ENCODE measurements at regions of chr10 and their contacts with region 1.

Region 1: DNA sequence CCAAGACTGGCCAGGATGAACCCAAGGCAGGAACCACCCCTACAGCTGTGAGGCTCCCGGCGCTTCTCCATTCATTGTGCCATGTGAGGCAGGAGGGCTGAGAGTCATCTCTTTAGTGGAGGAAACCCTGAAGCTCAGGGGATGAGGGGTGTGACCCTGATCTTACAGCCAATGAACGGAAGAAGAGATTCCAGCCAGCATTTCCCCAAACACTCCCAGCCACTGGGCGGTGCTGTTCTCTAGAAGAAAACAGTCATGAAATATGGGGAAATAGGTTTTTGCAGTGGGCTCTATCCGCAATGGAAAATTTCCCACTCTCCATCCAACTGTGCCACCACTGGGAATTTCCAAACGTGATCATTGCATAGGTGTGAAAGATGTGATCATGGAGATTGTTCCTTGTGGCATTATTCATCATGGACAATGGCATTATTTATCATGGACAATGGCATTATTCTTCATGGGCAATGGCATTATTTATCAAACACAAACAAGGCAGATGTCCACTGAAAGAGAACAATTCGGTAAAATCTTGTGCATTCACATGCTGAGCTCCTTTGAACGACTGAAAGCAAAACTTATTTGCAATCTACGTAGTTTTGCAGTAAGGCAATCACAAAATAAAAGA is 14.0 kb upstream of the SLC18A2 start:
- DNase-seq: peak; percentile 40
- H3K4me3 ChIP-seq: no peak overlapping the region
- H3K27ac ChIP-seq: no peak overlapping the region
- H3K4me1 ChIP-seq: no peaks in the 10 kb centered on the region
- H3K27me3 ChIP-seq: no peaks in the 10 kb centered on the region
- CTCF ChIP-seq: peak in 2 of 3 experiments; percentile 11 to 18
- POLR2A ChIP-seq: no peak

Region 2: DNA sequence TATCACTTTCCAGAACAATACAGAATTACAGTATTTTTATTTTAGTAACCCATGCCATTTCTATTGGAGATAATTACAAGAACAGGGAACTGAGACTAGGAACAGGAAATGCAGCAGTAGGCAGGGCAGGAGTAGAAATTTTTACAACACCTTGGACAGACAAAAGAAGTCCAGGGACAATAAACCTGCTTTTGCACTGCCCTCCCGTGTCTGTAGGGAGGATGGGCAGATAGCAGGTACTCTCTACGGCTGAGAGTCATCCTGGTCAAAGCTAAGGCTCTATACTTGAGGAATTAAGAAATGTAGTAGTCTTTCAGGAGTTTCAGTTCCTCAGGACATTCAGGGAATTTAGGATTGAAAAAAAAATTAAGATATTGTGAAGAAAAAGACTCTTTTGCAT is 152.3 kb before region 1 on chr10:
- intact Hi-C with region 1: no loop called
- DNase-seq: no peak
- H3K4me3 ChIP-seq: no peak overlapping the region
- H3K27ac ChIP-seq: no peak overlapping the region
- H3K4me1 ChIP-seq: no peaks in the 10 kb centered on the region
- H3K27me3 ChIP-seq: no peaks in the 10 kb centered on the region
- CTCF ChIP-seq: no peak
- POLR2A ChIP-seq: no peak

Region 3: GRCh38 chr10:117274509-117274908 is 47.6 kb after region 1 on chr10:
- intact Hi-C with region 1: no loop called
- DNase-seq: no peak
- H3K4me3 ChIP-seq: no peak overlapping the region
- H3K27ac ChIP-seq: no peak overlapping the region
- H3K4me1 ChIP-seq: no peaks in the 10 kb centered on the region
- H3K27me3 ChIP-seq: no peaks in the 10 kb centered on the region
- CTCF ChIP-seq: no peak
- POLR2A ChIP-seq: no peak

Region 4: DNA sequence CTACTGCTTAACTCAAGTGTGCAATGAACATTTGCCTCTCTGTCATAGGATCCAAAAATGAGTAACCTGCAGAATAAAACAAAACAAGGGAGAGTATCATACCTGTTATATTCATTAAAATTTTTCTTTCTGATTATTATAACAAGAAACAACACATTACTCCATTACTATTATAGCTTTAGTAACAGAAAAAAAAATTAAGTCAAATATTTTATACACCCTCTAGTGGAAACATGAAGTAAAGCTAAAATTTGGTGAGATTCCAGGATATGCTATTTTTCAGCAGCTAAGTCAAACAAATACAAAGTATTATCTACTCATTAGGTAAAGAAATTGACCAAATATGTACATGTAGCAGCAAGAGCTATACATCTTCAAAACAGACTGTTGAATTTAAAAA is 92.0 kb after region 1 on chr10:
- intact Hi-C with region 1: loop called (anchors 10 kb)
- DNase-seq: no peak
- H3K4me3 ChIP-seq: no peak overlapping the region
- H3K27ac ChIP-seq: no peak overlapping the region
- H3K4me1 ChIP-seq: no peaks in the 10 kb centered on the region
- H3K27me3 ChIP-seq: no peaks in the 10 kb centered on the region
- CTCF ChIP-seq: peak in 1 of 3 experiments; percentile 31
- POLR2A ChIP-seq: no peak

Measured in testis (tissue), 5 donors.